ENCODE measurements at regions of chr5 and their contacts with region 1.

Region 1: DNA sequence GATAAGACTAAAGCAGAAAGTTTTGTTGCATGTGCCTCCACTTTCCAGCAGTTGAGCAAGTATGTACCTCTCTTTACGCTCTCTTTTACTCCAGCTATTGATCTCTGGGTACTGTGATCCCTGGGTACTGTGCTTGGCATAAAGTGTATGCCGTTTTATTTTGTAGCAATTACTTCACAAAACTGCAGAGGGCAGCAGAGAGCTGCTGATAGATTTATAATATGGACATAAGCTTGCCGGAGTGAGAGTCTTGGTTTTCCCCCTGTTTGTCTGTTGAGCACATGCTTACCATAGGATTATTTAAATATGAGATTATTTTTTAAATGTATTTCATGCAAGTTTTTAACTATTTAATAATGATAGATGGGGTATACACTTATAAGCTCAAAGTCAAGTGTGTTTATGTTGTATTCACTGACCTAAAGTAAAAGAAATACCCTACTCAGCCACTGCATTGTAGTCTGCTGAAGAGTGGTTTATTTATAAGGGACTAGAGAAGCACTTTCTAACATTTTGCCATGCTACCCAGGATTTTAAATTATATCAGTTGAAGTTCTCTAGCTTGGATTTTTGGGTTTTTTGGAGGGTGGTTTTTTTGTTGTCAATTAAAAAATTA is 13.0 kb downstream of the TTC1 start:
- DNase-seq: peak; percentile 4 to 80 (median 53)
- ATAC-seq: peak; percentile 91
- H3K4me3 ChIP-seq: no peak overlapping the region
- H3K4me3 Mint-ChIP-seq: no peak overlapping the region
- H3K27ac ChIP-seq: no peak overlapping the region
- H3K27ac Mint-ChIP-seq: peak overlapping the region; percentile 42
- H3K4me1 ChIP-seq: peaks cover 3% of the 10 kb centered on the region
- H3K4me1 Mint-ChIP-seq: peaks cover 35% of the 10 kb centered on the region
- H3K27me3 ChIP-seq: no peaks in the 10 kb centered on the region
- H3K27me3 Mint-ChIP-seq: no peaks in the 10 kb centered on the region
- CTCF ChIP-seq: peak; percentile 91

Region 2: DNA sequence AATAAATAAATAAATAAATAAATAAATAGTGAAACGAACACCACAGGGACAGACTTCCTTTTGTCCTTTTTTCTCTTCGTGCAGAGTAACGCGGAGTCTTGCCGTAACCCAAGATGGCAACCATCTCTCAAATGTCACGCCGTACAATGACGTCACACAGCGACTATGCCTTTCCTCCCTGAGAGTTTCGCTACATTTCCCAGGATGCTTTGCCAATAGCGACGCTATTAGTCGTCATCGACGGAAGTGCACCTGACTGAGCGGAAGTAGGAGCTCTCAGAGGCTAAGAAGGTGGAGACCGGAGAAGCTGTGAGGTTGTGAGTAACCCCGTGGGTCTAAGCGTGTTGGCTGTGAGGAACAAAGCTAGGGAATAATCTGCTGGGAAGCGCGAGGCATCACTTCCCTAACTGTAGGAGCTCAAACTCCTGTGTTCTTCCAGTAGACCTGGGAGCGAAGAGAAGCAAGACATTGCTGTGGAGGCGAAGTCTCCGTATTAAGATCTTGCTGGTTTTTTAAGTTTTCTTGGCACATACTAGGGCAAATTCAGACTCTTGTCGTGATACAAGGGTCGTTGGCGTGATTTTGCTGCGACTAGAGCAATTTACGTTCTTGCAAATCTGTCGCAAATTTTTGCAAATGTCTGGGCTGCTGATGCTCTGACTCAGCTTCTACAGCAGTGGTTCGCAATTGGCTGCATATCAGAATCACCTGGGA is 12.9 kb before region 1 on chr5 and contains the start of gene TTC1:
- CTCF ChIA-PET with region 1: interaction called, 42 read pairs
- POLR2A ChIA-PET with region 1: interaction called, 6 read pairs
- intact Hi-C with region 1: no loop called
- DNase-seq: peak; percentile 82 to 99 (median 93)
- ATAC-seq: peak; percentile 96
- H3K4me3 ChIP-seq: peak within 1 kb of the TSS; percentile 84 to 92
- H3K4me3 Mint-ChIP-seq: peak within 1 kb of the TSS; percentile 99
- H3K27ac ChIP-seq: peak within 1 kb of the TSS; percentile 86 to 89
- H3K27ac Mint-ChIP-seq: peak within 1 kb of the TSS; percentile 99
- H3K4me1 ChIP-seq: peaks cover 25% of the 10 kb centered on the region
- H3K4me1 Mint-ChIP-seq: peaks cover 31% of the 10 kb centered on the region
- H3K27me3 ChIP-seq: peaks cover 0 to 2% of the 10 kb centered on the region in 2 experiments
- H3K27me3 Mint-ChIP-seq: no peaks in the 10 kb centered on the region
- CTCF ChIP-seq: no peak
- total RNA-seq, gene TTC1: 12.6 to 14.3 TPM

Region 3: GRCh38 chr5:160199410-160199911 is 177.5 kb after region 1 on chr5:
- CTCF ChIA-PET with region 1: interaction called, 9 read pairs
- POLR2A ChIA-PET with region 1: no interaction called
- intact Hi-C with region 1: loop called (anchors 2 to 5 kb)
- DNase-seq: peak; percentile 48 to 81 (median 68)
- ATAC-seq: peak; percentile 96
- H3K4me3 ChIP-seq: peak overlapping the region; percentile 50 to 51
- H3K4me3 Mint-ChIP-seq: peak overlapping the region; percentile 73
- H3K27ac ChIP-seq: no peak overlapping the region
- H3K27ac Mint-ChIP-seq: no peak overlapping the region
- H3K4me1 ChIP-seq: peaks cover 11% of the 10 kb centered on the region
- H3K4me1 Mint-ChIP-seq: peaks cover 8% of the 10 kb centered on the region
- H3K27me3 ChIP-seq: no peaks in the 10 kb centered on the region
- H3K27me3 Mint-ChIP-seq: peaks cover 16% of the 10 kb centered on the region
- CTCF ChIP-seq: peak; percentile 79

Region 4: GRCh38 chr5:161691911-161692310 is 1670.0 kb after region 1 on chr5:
- CTCF ChIA-PET with region 1: no interaction called
- POLR2A ChIA-PET with region 1: no interaction called
- intact Hi-C with region 1: no loop called
- DNase-seq: no peak
- ATAC-seq: no peak
- H3K4me3 ChIP-seq: no peak overlapping the region
- H3K4me3 Mint-ChIP-seq: no peak overlapping the region
- H3K27ac ChIP-seq: no peak overlapping the region
- H3K27ac Mint-ChIP-seq: no peak overlapping the region
- H3K4me1 ChIP-seq: no peaks in the 10 kb centered on the region
- H3K4me1 Mint-ChIP-seq: no peaks in the 10 kb centered on the region
- H3K27me3 ChIP-seq: no peaks in the 10 kb centered on the region
- H3K27me3 Mint-ChIP-seq: no peaks in the 10 kb centered on the region
- CTCF ChIP-seq: no peak

Measured in CD8-positive, alpha-beta T cell (primary cell).